T-cell (primary cell): ENCODE measurements at regions of chr1 and their contacts with region 1.

Region 1: DNA sequence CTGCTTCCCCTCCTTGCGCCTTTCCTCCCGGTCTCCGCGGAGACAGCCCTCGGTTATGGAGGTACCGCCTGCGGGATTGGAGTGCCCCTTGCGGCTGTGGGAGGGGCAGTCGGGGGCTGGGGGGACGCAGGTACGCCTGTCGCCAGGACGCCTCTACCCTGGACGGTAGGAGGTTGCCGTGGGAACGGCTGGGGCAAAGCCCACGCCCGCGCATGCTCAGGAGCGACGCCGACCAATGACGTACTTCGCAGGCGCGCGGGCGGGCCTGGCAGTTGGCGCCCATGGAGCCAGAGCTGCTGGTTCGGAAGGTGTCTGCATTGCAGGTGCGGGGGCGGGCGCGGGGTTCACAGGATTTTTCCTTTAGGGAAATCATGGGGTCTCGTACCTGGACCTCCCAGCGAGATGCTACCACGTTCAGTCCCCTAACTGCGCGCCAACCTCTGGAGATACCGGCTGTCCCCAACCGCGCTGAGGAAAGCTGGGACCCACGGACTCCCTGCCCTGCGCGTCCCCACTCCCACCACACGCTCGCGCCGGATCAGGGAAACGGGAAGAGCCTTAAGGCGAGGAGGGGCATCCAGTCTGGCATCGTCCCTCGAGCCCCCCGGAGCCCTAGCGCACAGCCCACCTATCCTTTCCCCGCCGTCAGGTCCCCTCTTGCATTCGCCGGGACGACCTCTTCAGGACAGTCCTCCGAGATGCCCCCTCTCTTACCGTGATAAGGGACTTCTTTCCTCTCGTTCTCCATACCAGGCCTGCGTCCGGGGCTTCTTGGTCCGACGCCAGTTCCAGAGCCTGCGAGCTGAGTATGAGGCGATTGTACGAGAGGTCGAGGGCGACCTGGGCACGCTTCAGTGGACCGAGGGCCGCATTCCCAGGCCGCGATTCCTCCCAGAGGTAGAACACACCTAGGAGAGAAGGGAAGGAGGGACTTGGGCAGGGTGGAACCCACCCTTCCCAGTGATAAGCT is at the start of gene IQCC:
- DNase-seq: peak; percentile 63 to 93 (median 80)
- ATAC-seq: peak; percentile 61 to 73 (median 70)
- H3K4me3 ChIP-seq: peak within 1 kb of the TSS; percentile 76 to 80
- H3K4me3 Mint-ChIP-seq: peak within 1 kb of the TSS; percentile 82 to 85 (median 84)
- H3K27ac ChIP-seq: peak within 1 kb of the TSS; percentile 44
- H3K27ac Mint-ChIP-seq: peak within 1 kb of the TSS; percentile 39 to 46
- H3K4me1 ChIP-seq: peaks cover 11 to 52% of the 10 kb centered on the region in 2 experiments
- H3K4me1 Mint-ChIP-seq: peaks cover 32 to 55% (median 32%) of the 10 kb centered on the region in 3 donors
- H3K27me3 ChIP-seq: no peaks in the 10 kb centered on the region
- H3K27me3 Mint-ChIP-seq: no peaks in the 10 kb centered on the region
- total RNA-seq, gene IQCC: 1.3 to 3.6 (median 2.3) TPM

Region 2: GRCh38 chr1:32138943-32139342 is 66.7 kb before region 1 on chr1:
- CTCF ChIA-PET with region 1: no interaction called
- POLR2A ChIA-PET with region 1: interaction called in 1 of 2 experiments, 12 read pairs
- DNase-seq: no peak
- ATAC-seq: no peak
- H3K4me3 ChIP-seq: no peak overlapping the region
- H3K4me3 Mint-ChIP-seq: no peak overlapping the region
- H3K27ac ChIP-seq: no peak overlapping the region
- H3K27ac Mint-ChIP-seq: peak overlapping the region; percentile 44 to 71
- H3K4me1 ChIP-seq: peaks cover 2 to 10% of the 10 kb centered on the region in 2 experiments
- H3K4me1 Mint-ChIP-seq: peaks cover 54 to 65% (median 65%) of the 10 kb centered on the region in 3 donors
- H3K27me3 ChIP-seq: no peaks in the 10 kb centered on the region
- H3K27me3 Mint-ChIP-seq: no peaks in the 10 kb centered on the region

Region 3: DNA sequence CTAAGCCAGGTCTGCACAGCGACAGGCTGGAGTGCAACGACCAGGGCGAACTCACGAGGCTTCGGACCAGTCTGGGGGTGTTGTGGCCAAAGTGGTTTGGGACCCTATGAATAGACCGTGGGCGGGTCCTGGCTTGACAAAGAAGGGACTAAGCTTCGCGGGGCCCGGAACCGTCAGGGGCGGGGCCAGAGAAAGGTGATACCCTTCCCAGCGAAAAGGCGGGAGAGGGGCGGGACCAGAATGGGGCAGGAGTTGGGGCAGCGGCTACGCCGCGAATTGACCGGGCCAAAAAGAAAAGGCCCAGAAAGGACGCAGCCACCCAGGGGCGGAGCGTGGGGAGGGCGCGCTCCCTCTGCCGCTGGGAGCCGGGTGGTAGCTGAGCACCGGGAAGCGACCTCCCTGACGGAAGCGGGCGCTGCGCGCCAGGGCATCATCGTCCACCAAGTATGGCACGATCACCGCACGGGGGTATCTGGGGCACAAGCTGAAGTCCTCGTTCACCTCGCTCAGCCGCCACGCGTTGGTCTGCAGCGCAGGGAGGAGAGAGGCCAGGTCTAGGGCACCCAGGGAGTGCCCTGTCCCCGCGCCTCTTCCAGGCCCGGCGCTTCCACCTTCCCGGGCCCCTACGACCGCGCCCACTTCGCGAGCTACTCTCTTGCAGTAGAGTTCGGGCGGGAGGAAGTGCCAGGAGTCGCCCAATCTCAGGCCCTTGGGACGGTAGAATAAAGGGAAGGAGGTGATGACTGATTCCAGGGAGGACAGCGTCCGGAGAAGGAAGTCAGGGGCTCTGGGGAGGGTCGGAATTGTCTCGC is 34.7 kb after region 1 on chr1:
- CTCF ChIA-PET with region 1: no interaction called
- POLR2A ChIA-PET with region 1: no interaction called
- DNase-seq: peak; percentile 30 to 78 (median 58)
- ATAC-seq: peak; percentile 75 to 86 (median 78)
- H3K4me3 ChIP-seq: peak overlapping the region; percentile 75 to 89
- H3K4me3 Mint-ChIP-seq: peak overlapping the region; percentile 84 to 89 (median 87)
- H3K27ac ChIP-seq: peak overlapping the region; percentile 42
- H3K27ac Mint-ChIP-seq: peak overlapping the region; percentile 71 to 86
- H3K4me1 ChIP-seq: peaks cover 5 to 30% of the 10 kb centered on the region in 2 experiments
- H3K4me1 Mint-ChIP-seq: peaks cover 13 to 17% (median 16%) of the 10 kb centered on the region in 3 donors
- H3K27me3 ChIP-seq: no peaks in the 10 kb centered on the region
- H3K27me3 Mint-ChIP-seq: no peaks in the 10 kb centered on the region